ENCODE measurements at regions of chr4 and their contacts with region 1.

Region 1: GRCh38 chr4:15396157-15396800 is 31.6 kb upstream of the C1QTNF7 start:
- DNase-seq: peak; percentile 74
- H3K4me3 Mint-ChIP-seq: no peak overlapping the region
- H3K27ac Mint-ChIP-seq: no peak overlapping the region
- H3K4me1 Mint-ChIP-seq: peaks cover 15% of the 10 kb centered on the region
- H3K27me3 Mint-ChIP-seq: no peaks in the 10 kb centered on the region

Region 2: GRCh38 chr4:15231265-15232091 is 164.8 kb before region 1 on chr4:
- CTCF ChIA-PET with region 1: interaction called, 60 read pairs
- DNase-seq: peak; percentile 83
- H3K4me3 Mint-ChIP-seq: no peak overlapping the region
- H3K27ac Mint-ChIP-seq: no peak overlapping the region
- H3K4me1 Mint-ChIP-seq: peaks cover 33% of the 10 kb centered on the region
- H3K27me3 Mint-ChIP-seq: no peaks in the 10 kb centered on the region

Region 3: GRCh38 chr4:15238720-15239119 is 157.6 kb before region 1 on chr4:
- CTCF ChIA-PET with region 1: interaction called, 60 read pairs
- DNase-seq: peak; percentile 57
- H3K4me3 Mint-ChIP-seq: no peak overlapping the region
- H3K27ac Mint-ChIP-seq: no peak overlapping the region
- H3K4me1 Mint-ChIP-seq: peaks cover 15% of the 10 kb centered on the region
- H3K27me3 Mint-ChIP-seq: peaks cover 3% of the 10 kb centered on the region

Region 4: GRCh38 chr4:15378062-15378461 is 18.2 kb before region 1 on chr4:
- CTCF ChIA-PET with region 1: interaction called, 13 read pairs
- DNase-seq: no peak
- H3K4me3 Mint-ChIP-seq: no peak overlapping the region
- H3K27ac Mint-ChIP-seq: no peak overlapping the region
- H3K4me1 Mint-ChIP-seq: peaks cover 29% of the 10 kb centered on the region
- H3K27me3 Mint-ChIP-seq: no peaks in the 10 kb centered on the region

Region 5: GRCh38 chr4:15385928-15386327 is 10.4 kb before region 1 on chr4:
- CTCF ChIA-PET with region 1: interaction called, 20 read pairs
- DNase-seq: no peak
- H3K4me3 Mint-ChIP-seq: no peak overlapping the region
- H3K27ac Mint-ChIP-seq: no peak overlapping the region
- H3K4me1 Mint-ChIP-seq: no peaks in the 10 kb centered on the region
- H3K27me3 Mint-ChIP-seq: no peaks in the 10 kb centered on the region

Region 6: DNA sequence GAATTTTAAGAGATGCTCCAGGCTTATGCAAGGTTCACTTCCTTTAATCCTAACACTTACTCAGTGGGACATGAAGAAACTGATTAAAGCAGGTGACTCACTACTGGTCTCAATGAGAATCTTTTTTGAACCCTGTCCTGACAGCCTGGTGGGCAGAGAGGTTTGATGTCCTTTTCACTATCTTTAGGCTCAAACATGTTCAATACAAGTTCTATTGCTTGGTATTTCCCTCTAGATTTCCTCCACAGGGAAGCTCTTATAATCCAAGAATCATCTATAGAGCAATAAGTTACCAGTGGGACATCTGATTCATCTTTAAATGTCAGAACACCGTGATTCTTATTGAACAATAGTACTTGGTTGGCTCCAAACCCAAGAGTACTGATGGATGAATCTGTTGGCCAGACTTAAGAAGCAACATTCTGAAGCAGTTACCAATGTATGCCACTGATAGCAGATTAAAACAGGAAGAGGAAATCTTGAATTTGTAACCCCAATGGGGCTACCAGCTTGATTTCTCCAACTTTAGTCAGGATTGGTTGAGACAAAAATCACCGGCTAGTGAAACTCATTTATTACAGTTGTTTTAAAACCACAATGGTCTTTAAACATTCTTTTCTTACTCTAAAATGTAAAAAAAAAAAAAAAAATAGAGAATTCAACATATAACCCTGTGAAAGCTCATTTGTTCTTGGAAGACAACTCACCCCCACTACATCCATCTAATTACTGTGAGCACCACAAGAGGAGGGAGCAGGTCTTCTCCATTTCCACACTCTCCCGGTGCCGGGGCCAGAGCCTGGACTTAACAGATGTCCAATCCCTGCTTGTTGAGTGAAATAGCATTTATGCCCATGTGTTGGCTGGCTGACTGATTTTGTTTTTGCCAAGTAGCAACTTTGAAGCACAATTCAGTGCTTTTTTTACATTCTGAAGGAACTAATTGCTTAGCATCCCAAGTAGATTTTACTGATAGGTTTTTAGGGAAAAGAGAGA is 498.9 kb after region 1 on chr4:
- CTCF ChIA-PET with region 1: no interaction called
- DNase-seq: no peak
- H3K4me3 Mint-ChIP-seq: no peak overlapping the region
- H3K27ac Mint-ChIP-seq: no peak overlapping the region
- H3K4me1 Mint-ChIP-seq: no peaks in the 10 kb centered on the region
- H3K27me3 Mint-ChIP-seq: peaks cover 41% of the 10 kb centered on the region

Measured in activated naive CD4-positive, alpha-beta T cell treated with anti-CD3 and anti-CD28 coated beads, Interleukin-2, amount 10 ng/mL, durations not matched to agents 7 days and 5 days (primary cell).